ENCODE measurements at regions of chr14 and their contacts with region 1.

Region 1: DNA sequence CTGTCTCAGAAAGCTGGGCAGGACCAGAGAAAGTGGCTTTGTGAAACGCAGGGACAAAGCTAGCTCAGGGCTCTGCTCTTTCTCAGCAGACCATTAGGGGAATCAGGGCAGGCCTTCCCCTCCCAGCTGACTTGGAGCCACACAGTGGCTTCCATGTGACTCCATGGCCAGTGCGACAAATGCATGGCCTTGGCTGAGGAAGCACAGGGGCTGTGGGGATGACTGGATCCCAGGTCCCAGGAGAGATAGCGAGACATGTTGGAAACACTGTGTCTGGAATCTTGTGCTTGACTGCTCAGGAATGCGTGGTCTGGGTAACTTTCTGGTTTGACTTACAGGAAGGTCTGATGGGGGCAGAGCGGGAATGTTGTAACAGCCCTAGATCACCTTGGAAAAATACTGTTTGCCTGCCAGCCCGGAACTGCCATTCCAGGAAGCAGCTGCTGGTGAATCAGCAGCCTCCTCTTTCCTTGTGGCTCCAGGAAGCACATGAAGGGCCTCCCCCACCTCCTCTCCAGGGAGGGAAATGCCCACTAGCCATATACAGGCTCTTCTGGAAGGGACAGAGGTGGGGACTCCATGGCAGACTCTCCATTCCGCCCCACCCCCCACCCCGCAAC is 133.5 kb upstream of the HIF1A start:
- DNase-seq: peak; percentile 91 to 100
- H3K4me3 ChIP-seq: peak overlapping the region; percentile 30; the same call in 1 of the 2 replicates
- H3K27ac ChIP-seq: peak overlapping the region; percentile 98
- H3K4me1 ChIP-seq: peaks cover 79% of the 10 kb centered on the region
- H3K27me3 ChIP-seq: no peaks in the 10 kb centered on the region
- CTCF ChIP-seq: no peak; the same call in 1 of the 2 replicates

Region 2: DNA sequence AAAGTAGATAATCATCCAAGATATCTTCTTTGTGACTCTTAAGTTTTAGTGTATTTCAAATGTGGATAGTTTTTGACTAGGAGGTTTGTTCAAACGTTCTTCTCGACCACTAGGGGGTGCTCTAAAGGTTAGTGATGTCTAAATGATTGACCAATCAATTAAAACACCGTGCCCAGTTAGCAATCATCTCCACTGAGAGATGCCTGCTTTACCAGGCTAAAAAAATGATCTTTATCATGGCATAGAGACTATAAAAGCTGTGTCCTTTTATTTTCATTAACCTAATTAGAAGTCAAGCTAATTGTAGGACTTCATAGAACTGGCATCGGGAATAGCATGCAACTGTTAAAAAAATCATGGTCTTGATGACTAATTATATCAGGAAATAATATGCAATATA is 86.5 kb before region 1 on chr14:
- CTCF ChIA-PET with region 1: interaction called, 4 read pairs
- POLR2A ChIA-PET with region 1: no interaction called
- intact Hi-C with region 1: loop called (anchors 1 kb)
- DNase-seq: peak in 1 of 2 experiments; percentile 74
- H3K4me3 ChIP-seq: no peak overlapping the region
- H3K27ac ChIP-seq: peak overlapping the region; percentile 94
- H3K4me1 ChIP-seq: peaks cover 92% of the 10 kb centered on the region
- H3K27me3 ChIP-seq: no peaks in the 10 kb centered on the region
- CTCF ChIP-seq: peak; percentile 90

Region 3: GRCh38 chr14:61525293-61526011 is 36.3 kb before region 1 on chr14:
- CTCF ChIA-PET with region 1: interaction called, 5 read pairs
- POLR2A ChIA-PET with region 1: interaction called, 7 read pairs
- intact Hi-C with region 1: loop called (anchors 1 kb)
- DNase-seq: peak; percentile 94 to 100
- H3K4me3 ChIP-seq: peak overlapping the region; percentile 32; the same call in 1 of the 2 replicates
- H3K27ac ChIP-seq: peak overlapping the region; percentile 98
- H3K4me1 ChIP-seq: peaks cover 69% of the 10 kb centered on the region
- H3K27me3 ChIP-seq: no peaks in the 10 kb centered on the region
- CTCF ChIP-seq: no peak

Region 4: DNA sequence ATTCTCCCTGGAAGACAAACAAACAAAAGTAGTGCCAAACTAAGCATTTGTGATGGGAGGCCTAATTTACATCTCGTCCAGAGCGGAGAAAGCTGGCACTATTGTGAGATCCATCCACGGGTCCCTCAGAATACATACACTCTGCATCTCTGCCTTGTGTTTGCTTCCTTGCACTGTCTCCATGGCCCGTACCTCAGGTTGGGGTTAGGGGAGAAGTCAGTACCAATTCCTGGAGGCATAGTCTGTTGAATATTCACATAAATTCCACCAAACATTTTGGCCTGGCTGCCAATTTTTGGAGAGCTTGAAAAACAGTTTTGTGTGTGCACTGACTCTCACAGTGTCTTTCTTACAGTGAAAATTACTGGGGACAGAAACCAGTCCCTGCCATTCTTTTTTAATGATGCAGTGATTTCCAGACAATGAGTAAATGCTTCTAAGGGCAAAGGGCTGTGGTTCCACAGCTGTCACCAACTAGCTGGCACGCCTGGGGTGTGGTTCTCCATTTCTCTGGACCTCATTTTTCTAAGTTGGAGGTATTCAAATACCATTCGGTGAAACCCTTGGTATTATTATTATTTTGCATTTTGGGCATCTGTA is 13.9 kb after region 1 on chr14:
- CTCF ChIA-PET with region 1: no interaction called
- POLR2A ChIA-PET with region 1: interaction called, 12 read pairs
- intact Hi-C with region 1: no loop called
- DNase-seq: peak; percentile 56 to 60
- H3K4me3 ChIP-seq: no peak overlapping the region
- H3K27ac ChIP-seq: peak overlapping the region; percentile 17
- H3K4me1 ChIP-seq: peaks cover 75% of the 10 kb centered on the region
- H3K27me3 ChIP-seq: no peaks in the 10 kb centered on the region
- CTCF ChIP-seq: no peak

Region 5: GRCh38 chr14:61662437-61663311 is 100.9 kb after region 1 on chr14:
- CTCF ChIA-PET with region 1: no interaction called
- POLR2A ChIA-PET with region 1: no interaction called
- intact Hi-C with region 1: loop called (anchors 2 kb)
- DNase-seq: peak; percentile 69 to 90
- H3K4me3 ChIP-seq: peak overlapping the region; percentile 3; the same call in 1 of the 2 replicates
- H3K27ac ChIP-seq: peak overlapping the region; percentile 91
- H3K4me1 ChIP-seq: peaks cover 68% of the 10 kb centered on the region
- H3K27me3 ChIP-seq: no peaks in the 10 kb centered on the region
- CTCF ChIP-seq: no peak

Region 6: DNA sequence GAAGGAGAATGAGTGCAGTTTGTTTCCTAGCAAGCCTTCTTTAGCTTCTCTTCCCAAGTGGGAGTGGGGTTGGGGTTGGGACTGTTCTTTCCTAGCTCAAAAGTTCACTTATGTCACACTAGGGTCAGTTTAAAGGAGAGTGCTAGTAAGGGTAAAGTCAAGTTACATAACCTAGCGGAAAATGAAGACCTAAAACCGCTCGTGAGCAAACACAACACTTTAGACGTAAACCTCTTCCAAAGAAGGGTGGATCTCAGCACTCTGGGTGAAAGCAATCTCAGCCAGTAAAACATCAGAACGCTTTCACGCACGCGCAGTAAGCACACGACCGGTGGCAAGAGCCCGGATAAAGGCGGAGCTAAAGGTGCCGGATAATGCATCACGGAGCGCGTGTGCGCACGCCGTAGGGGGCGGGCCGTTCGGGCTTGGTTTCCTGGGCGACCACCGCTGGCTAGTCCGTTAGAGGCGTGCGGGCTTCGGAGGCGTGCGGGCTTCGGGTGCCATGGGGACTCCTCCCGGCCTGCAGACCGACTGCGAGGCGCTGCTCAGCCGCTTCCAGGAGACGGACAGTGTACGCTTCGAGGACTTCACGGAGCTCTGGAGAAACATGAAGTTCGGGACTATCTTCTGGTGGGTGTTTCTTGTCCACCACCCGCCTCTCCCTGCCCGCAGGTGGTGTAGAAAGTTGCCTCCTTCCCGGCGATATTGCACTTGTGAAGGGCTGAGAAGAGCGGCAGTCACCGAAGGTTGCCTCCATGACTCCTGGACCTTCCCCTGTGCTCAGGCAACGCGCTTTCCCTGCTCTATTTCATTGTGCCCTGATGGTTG is 200.4 kb after region 1 on chr14 and contains the start of gene SNAPC1:
- CTCF ChIA-PET with region 1: no interaction called
- POLR2A ChIA-PET with region 1: interaction called, 10 read pairs
- intact Hi-C with region 1: no loop called
- DNase-seq: peak; percentile 97
- H3K4me3 ChIP-seq: peak within 1 kb of the TSS; percentile 72
- H3K27ac ChIP-seq: peak within 1 kb of the TSS; percentile 72
- H3K4me1 ChIP-seq: peaks cover 40% of the 10 kb centered on the region
- H3K27me3 ChIP-seq: no peaks in the 10 kb centered on the region
- CTCF ChIP-seq: no peak
- total RNA-seq, gene SNAPC1: 17.9 and 18.0 TPM in 2 replicates

Region 7: DNA sequence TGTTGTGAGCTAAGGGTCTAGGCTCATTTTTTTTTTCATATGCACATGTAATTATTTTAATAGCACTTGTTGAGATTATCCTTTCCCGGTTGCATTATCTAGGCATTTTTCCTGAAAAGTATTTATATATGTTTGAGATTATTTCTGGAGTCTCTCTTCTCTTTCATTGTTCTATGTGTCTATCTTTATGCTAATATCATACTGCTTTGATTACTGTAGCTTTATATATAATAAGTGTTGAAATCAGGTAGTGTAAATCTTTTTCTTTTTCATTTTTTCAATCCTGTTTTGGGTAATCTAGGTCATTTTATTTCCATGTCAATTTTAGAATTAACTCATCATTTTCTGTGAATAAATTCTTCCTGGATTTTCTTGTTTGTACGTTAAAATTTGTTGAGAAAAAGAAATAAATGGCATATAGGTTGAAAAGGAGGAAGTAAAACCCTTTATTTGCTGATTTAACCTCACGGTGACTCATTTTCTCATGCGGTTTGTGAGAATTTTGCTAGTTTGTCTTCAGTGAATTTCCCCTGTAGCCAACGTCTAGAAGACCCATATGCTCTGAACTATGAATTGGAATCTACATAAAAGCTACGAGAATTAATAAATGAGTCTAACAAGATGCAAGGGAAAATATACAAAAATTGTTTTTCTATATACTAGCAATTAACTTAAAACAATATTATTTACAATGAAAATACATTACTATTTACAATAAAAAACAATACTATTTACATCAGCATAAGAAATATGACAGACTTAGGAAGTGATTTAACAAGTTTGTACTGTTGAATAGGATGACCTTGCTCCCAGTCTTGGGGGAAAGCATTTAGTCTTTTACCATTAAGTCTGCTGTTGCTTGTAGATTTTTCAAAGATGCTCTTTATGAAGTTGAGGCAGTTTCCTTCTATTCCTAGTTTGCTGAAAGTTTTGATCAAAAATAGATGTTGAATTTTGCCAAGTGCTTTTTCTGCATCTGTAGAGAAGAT is 305.5 kb after region 1 on chr14:
- CTCF ChIA-PET with region 1: no interaction called
- POLR2A ChIA-PET with region 1: no interaction called
- intact Hi-C with region 1: no loop called
- DNase-seq: peak; percentile 9 to 84
- H3K4me3 ChIP-seq: no peak overlapping the region
- H3K27ac ChIP-seq: peak overlapping the region; percentile 64
- H3K4me1 ChIP-seq: peaks cover 18% of the 10 kb centered on the region
- H3K27me3 ChIP-seq: no peaks in the 10 kb centered on the region
- CTCF ChIP-seq: no peak